ENCODE measurements at regions of chr1 and their contacts with region 1.

Region 1: DNA sequence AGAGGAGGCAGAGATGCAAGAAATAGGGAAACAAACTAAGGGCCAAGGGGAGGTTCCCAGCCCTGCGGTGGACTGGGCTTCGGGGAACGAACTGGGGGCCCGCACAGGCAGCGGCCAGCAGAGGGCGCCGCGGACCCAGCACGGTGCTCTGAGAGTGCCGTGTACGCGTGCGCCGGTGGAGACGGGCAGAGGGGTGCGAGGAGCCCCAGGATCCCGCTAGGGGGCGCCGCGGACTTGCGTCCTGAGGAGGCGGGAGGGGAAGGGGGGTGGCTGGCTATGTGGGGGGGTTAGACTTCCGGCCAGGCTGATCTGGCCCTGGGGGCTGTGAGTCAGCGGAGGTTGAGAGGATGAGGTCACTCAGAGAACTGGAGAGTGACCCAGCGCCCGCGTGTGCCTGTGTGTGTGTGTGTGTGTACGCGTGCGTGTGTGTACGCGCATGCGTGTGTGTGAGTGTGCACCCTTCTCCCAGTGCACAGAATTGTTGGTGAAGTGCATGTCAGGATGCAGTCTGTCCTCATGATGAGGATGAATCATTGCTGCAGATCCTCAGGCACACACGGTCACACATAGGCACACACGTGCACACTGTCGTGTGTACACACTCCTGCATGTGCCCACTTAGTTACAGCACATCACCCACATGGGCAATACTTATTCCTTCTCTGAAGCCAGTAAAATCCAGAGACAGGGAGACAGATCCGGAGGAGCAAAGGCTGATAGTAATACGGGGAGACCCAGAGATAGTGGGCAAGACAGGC is 17.0 kb downstream of the NES start:
- DNase-seq: peak; percentile 97 to 98 (median 98)
- ATAC-seq: peak; percentile 81 to 88 (median 83)
- H3K4me3 ChIP-seq: peak overlapping the region in 10 of 12 donors; percentile 19 to 46 (median 42)
- H3K27ac ChIP-seq: peak overlapping the region; percentile 53 to 99 (median 96)
- H3K4me1 ChIP-seq: peaks cover 26 to 82% (median 69%) of the 10 kb centered on the region in 12 donors
- H3K27me3 ChIP-seq: peaks cover 0 to 21% (median 0%) of the 10 kb centered on the region in 9 donors
- CTCF ChIP-seq: peak; percentile 94 to 100 (median 98)
- POLR2A ChIP-seq: peak in 1 of 2 donors; percentile 33

Region 2: DNA sequence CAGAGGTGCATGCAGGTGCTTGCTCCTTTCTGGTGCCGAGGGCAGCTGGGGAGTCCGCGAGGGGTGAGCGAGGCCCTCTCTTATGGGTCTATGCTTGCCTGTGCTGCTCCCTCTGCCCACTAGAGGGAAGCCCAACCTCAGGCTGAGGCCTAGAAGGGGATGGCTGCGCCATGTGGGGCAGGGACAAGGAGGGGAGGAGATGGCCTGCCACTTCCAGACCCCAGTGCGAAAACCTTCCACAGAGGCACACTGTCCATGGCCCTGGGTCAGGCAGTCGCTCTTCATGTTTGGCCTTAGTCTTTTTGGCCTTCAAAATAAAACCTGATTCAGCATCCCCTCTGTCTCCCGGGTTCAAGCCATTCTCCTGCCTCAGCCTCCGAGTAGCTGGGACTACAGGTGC is 277.1 kb before region 1 on chr1:
- intact Hi-C with region 1: loop called in 3 of 10 experiments (anchors 5 to 10 kb)
- DNase-seq: peak; percentile 31 to 72 (median 53)
- ATAC-seq: peak; percentile 61 to 93 (median 86)
- H3K4me3 ChIP-seq: no peak overlapping the region
- H3K27ac ChIP-seq: no peak overlapping the region
- H3K4me1 ChIP-seq: peaks cover 0 to 4% (median under 1%) of the 10 kb centered on the region in 12 donors
- H3K27me3 ChIP-seq: peaks cover 0 to 22% (median 6%) of the 10 kb centered on the region in 9 donors
- CTCF ChIP-seq: peak; percentile 61 to 80 (median 74)
- POLR2A ChIP-seq: no peak

Region 3: DNA sequence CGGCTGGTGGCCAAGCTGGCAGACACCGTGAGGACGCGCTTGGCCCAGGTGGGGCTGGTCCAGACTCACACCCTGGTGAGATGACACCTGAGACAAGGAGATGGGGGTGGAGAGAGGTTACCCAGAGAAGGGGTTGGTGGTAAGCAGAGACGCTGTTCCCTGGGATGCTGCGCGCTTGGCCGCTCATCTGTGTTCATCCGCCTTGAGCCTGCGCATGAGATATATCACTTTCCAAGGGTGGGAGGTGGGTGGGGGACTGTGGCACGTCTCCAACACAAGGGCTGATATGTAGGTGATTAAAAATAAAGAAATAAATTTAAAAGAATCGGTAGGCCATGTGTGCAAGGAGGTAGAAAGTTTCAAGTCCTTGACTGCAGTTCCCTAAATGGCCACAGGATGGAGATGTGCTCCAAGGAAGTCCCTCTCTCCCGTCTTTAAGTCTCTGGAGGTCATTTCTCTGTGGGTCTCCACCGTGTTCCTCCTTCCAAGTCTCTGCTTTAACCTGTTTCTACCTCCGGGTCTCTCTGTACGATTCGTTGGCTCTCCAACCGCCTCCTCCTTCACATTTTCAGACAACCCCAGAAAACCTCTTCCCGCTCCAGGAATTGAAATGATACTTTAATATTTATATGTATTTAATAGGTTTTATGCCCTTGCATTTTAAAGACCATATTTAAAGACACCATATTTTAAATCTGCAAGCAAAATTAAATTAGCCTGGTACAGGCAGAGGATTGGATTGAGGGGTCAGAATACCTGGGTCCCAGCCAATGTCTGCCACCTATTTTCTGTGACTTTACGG is 76.2 kb before region 1 on chr1:
- intact Hi-C with region 1: loop called in 8 of 10 experiments (anchors 1 to 5 kb)
- DNase-seq: peak in 4 of 5 donors; percentile 63 to 70 (median 66)
- ATAC-seq: peak in 3 of 4 donors; percentile 27 to 55 (median 54)
- H3K4me3 ChIP-seq: no peak overlapping the region
- H3K27ac ChIP-seq: no peak overlapping the region
- H3K4me1 ChIP-seq: peaks cover 0 to 7% (median 0%) of the 10 kb centered on the region in 12 donors
- H3K27me3 ChIP-seq: no peaks in the 10 kb centered on the region
- CTCF ChIP-seq: peak; percentile 86 to 98 (median 93)
- POLR2A ChIP-seq: no peak

Region 4: GRCh38 chr1:156677616-156678596 is 17.7 kb after region 1 on chr1:
- intact Hi-C with region 1: loop called (anchors 1 kb)
- DNase-seq: peak; percentile 80 to 89 (median 85)
- ATAC-seq: peak; percentile 35 to 79 (median 70)
- H3K4me3 ChIP-seq: peak overlapping the region in 11 of 12 donors; percentile 51 to 92 (median 69)
- H3K27ac ChIP-seq: peak overlapping the region in 11 of 12 donors; percentile 64 to 98 (median 91)
- H3K4me1 ChIP-seq: peaks cover 4 to 51% (median 33%) of the 10 kb centered on the region in 12 donors
- H3K27me3 ChIP-seq: peaks cover 0 to 47% (median 0%) of the 10 kb centered on the region in 9 donors
- CTCF ChIP-seq: peak; percentile 75 to 98 (median 90)
- POLR2A ChIP-seq: no peak

Region 5: GRCh38 chr1:156728597-156729462 is 68.7 kb after region 1 on chr1 and contains the start of gene ISG20L2:
- intact Hi-C with region 1: loop called in 1 of 10 experiments (anchors 2 kb)
- DNase-seq: peak; percentile 96 to 98 (median 97)
- ATAC-seq: peak; percentile 88 to 97 (median 96)
- H3K4me3 ChIP-seq: peak within 1 kb of the TSS; percentile 57 to 96 (median 82)
- H3K27ac ChIP-seq: peak within 1 kb of the TSS; percentile 88 to 99 (median 96)
- H3K4me1 ChIP-seq: peaks cover 22 to 54% (median 36%) of the 10 kb centered on the region in 12 donors
- H3K27me3 ChIP-seq: no peaks in the 10 kb centered on the region
- CTCF ChIP-seq: no peak
- POLR2A ChIP-seq: peak in 1 of 2 donors; percentile 61
- total RNA-seq, gene ISG20L2: 8.4 to 17.9 (median 12.8) TPM

Measured in heart left ventricle (tissue), 16 donors.